HCT116 (cell line): ENCODE measurements at regions of chr2 and their contacts with region 1.

Region 1: GRCh38 chr2:218360447-218360846 is 3.8 kb downstream of the CATIP start:
- DNase-seq: no peak
- ATAC-seq: no peak
- H3K4me3 ChIP-seq: no peak overlapping the region
- H3K27ac ChIP-seq: no peak overlapping the region
- H3K4me1 ChIP-seq: peaks cover 8 to 19% of the 10 kb centered on the region in 2 experiments; a peak in 3 of 4 replicates
- H3K27me3 ChIP-seq: no peaks in the 10 kb centered on the region
- CTCF ChIP-seq: no peak
- POLR2A ChIP-seq: no peak
- RAD21 ChIP-seq: no peak

Region 2: GRCh38 chr2:218097975-218098374 is 262.5 kb before region 1 on chr2:
- CTCF ChIA-PET with region 1: no interaction called
- POLR2A ChIA-PET with region 1: no interaction called
- RAD21 ChIA-PET with region 1: no interaction called
- intact Hi-C with region 1: no loop called
- DNase-seq: no peak
- ATAC-seq: no peak
- H3K4me3 ChIP-seq: no peak overlapping the region
- H3K27ac ChIP-seq: no peak overlapping the region
- H3K4me1 ChIP-seq: no peaks in the 10 kb centered on the region
- H3K27me3 ChIP-seq: peaks cover 12% of the 10 kb centered on the region; the same call in 1 of the 2 replicates
- CTCF ChIP-seq: no peak
- POLR2A ChIP-seq: no peak
- RAD21 ChIP-seq: no peak

Region 3: DNA sequence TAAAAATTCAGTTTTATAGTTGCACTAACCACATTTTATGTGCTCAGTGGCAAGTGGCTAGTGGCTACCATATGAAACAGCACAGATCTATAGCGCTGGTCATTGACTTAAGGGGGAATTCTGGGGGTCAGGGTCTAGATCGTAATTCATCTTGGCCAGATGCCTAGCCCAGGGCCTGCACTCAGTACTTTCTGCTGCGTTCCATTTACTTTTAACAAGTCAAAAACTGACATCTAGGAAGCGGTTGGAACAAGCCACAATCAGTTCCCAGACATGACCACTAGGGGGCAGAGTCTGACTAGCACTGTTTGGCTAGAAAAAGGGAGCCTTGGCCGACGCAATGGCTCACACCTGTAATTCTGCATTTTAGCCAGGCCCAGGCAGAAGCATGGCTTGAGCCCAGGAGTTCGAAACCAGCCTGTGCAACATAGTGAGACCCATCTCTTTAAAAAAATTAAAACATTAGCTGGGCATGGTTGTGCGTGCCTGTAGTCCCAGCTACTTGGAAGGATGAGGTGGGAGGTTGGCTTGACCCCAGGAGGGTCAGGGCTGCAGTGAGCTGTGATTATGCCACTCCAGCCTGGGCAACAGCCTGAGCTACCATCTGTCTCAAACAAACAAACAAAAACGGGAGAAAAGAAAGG is 59.1 kb before region 1 on chr2:
- CTCF ChIA-PET with region 1: interaction called, 16 read pairs
- POLR2A ChIA-PET with region 1: interaction called, 4 read pairs
- RAD21 ChIA-PET with region 1: interaction called in 1 of 2 experiments, 5 read pairs
- intact Hi-C with region 1: loop called (anchors 1 kb)
- DNase-seq: peak; percentile 91
- ATAC-seq: peak; percentile 83
- H3K4me3 ChIP-seq: no peak overlapping the region
- H3K27ac ChIP-seq: no peak overlapping the region
- H3K4me1 ChIP-seq: peaks cover 16 to 30% of the 10 kb centered on the region in 2 experiments
- H3K27me3 ChIP-seq: no peaks in the 10 kb centered on the region
- CTCF ChIP-seq: peak; percentile 93 to 98 (median 95)
- POLR2A ChIP-seq: no peak
- RAD21 ChIP-seq: peak; percentile 98